ENCODE measurements at regions of chr3 and their contacts with region 1.

Region 1: DNA sequence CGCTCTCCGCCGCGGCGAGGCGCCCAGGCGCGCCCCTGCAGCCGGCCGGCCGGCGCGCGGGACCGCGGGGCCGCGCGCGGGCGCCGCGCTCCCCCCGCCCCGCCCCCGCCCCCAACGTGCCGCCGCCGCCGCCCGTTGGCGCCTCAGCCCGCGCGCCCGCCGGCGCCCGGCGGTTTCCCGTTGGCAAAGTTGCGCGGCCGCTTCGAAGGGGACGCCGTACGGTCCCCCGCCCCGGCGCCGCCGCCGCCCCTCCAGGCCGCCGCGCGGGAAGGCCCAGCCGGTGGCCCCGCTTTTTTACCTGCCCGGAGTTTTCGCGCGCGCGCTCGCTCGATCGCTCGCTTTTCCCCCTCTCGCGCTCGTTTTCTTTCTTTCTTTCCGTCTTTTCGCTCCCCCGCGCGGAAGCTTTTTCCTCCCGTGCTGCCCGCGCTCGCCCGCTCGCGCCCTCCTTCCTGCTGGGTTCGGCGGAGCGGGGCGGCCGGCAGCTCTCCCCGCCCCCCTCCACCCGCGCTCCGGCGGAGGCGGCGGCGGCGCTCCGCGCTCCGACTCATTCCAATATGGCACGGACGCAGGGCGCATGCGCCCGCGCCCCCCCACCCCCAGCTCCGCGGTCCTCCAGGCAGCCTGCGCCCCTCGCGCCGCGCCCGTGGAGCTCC is at the start of gene SFMBT1:
- DNase-seq: peak; percentile 92
- ATAC-seq: peak; percentile 51
- H3K4me3 ChIP-seq: peak within 1 kb of the TSS; percentile 41 to 94 (median 84)
- H3K4me3 Mint-ChIP-seq: peak within 1 kb of the TSS; percentile 98
- H3K27ac ChIP-seq: peak within 1 kb of the TSS; percentile 83 to 88
- H3K27ac Mint-ChIP-seq: peak within 1 kb of the TSS; percentile 99
- H3K4me1 ChIP-seq: peaks cover 19 to 30% of the 10 kb centered on the region in 2 donors
- H3K4me1 Mint-ChIP-seq: peaks cover 43% of the 10 kb centered on the region
- H3K27me3 ChIP-seq: no peaks in the 10 kb centered on the region
- H3K27me3 Mint-ChIP-seq: no peaks in the 10 kb centered on the region
- CTCF ChIP-seq: no peak
- total RNA-seq, gene SFMBT1: 55.8 and 60.3 TPM in 2 replicates

Region 2: GRCh38 chr3:52685709-52686691 is 359.6 kb before region 1 on chr3 and contains the starts of genes GNL3 and PBRM1:
- CTCF ChIA-PET with region 1: no interaction called
- POLR2A ChIA-PET with region 1: no interaction called
- intact Hi-C with region 1: loop called (anchors 2 kb)
- DNase-seq: peak; percentile 98
- ATAC-seq: peak; percentile 86
- H3K4me3 ChIP-seq: peak within 1 kb of the TSS; percentile 67 to 90 (median 86)
- H3K4me3 Mint-ChIP-seq: peak within 1 kb of the TSS; percentile 99
- H3K27ac ChIP-seq: peak within 1 kb of the TSS; percentile 92 to 97
- H3K27ac Mint-ChIP-seq: peak within 1 kb of the TSS; percentile 100
- H3K4me1 ChIP-seq: peaks cover 20 to 21% of the 10 kb centered on the region in 2 donors
- H3K4me1 Mint-ChIP-seq: peaks cover 36% of the 10 kb centered on the region
- H3K27me3 ChIP-seq: no peaks in the 10 kb centered on the region
- H3K27me3 Mint-ChIP-seq: no peaks in the 10 kb centered on the region
- CTCF ChIP-seq: no peak
- total RNA-seq, gene GNL3: 67.3 and 68.5 TPM in 2 replicates
- total RNA-seq, gene PBRM1: 81.1 and 85.9 TPM in 2 replicates

Region 3: GRCh38 chr3:52742418-52743041 is 303.1 kb before region 1 on chr3:
- CTCF ChIA-PET with region 1: no interaction called
- POLR2A ChIA-PET with region 1: no interaction called
- intact Hi-C with region 1: loop called (anchors 1 kb)
- DNase-seq: peak; percentile 58
- ATAC-seq: no peak
- H3K4me3 ChIP-seq: no peak overlapping the region
- H3K4me3 Mint-ChIP-seq: no peak overlapping the region
- H3K27ac ChIP-seq: no peak overlapping the region
- H3K27ac Mint-ChIP-seq: no peak overlapping the region
- H3K4me1 ChIP-seq: no peaks in the 10 kb centered on the region
- H3K4me1 Mint-ChIP-seq: no peaks in the 10 kb centered on the region
- H3K27me3 ChIP-seq: no peaks in the 10 kb centered on the region
- H3K27me3 Mint-ChIP-seq: no peaks in the 10 kb centered on the region
- CTCF ChIP-seq: peak; percentile 77

Region 4: GRCh38 chr3:52897130-52898122 is 148.2 kb before region 1 on chr3 and contains the start of gene STIMATE:
- CTCF ChIA-PET with region 1: interaction called, 4 read pairs
- POLR2A ChIA-PET with region 1: interaction called, 5 read pairs
- intact Hi-C with region 1: loop called (anchors 1 kb)
- DNase-seq: peak; percentile 90
- ATAC-seq: peak; percentile 95
- H3K4me3 ChIP-seq: peak within 1 kb of the TSS; percentile 69 to 84 (median 78)
- H3K4me3 Mint-ChIP-seq: peak within 1 kb of the TSS; percentile 93
- H3K27ac ChIP-seq: peak within 1 kb of the TSS in 1 of 2 donors; percentile 52
- H3K27ac Mint-ChIP-seq: peak within 1 kb of the TSS; percentile 78
- H3K4me1 ChIP-seq: peaks cover 17 to 27% of the 10 kb centered on the region in 2 donors
- H3K4me1 Mint-ChIP-seq: peaks cover 48% of the 10 kb centered on the region
- H3K27me3 ChIP-seq: no peaks in the 10 kb centered on the region
- H3K27me3 Mint-ChIP-seq: no peaks in the 10 kb centered on the region
- CTCF ChIP-seq: no peak
- total RNA-seq, gene STIMATE: 37.7 and 38.4 TPM in 2 replicates

Region 5: DNA sequence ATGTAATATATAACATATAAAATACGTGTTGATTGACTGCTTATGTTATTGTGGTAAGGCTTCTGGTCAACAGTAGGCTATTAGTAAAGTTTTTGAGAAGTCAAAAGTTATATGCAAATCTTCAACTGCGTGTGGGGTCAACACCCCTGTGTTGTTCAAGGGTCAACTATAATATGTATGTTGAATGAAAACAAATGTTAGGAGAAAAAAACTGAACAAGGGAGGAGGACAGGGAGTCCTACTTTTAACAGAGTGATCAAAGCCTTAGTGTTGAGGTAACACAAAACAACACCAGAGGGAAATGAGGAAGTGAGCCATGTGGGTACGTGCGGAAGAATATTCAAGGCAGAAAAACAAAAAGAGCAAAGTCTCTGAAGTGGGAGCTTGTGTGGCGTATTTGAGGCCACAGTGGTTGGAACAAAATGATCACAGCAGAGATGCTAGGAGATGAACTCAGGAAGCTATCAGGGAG is 62.3 kb before region 1 on chr3:
- CTCF ChIA-PET with region 1: interaction called, 5 read pairs
- POLR2A ChIA-PET with region 1: interaction called, 17 read pairs
- intact Hi-C with region 1: loop called (anchors 1 kb)
- DNase-seq: peak; percentile 81
- ATAC-seq: peak; percentile 84
- H3K4me3 ChIP-seq: peak overlapping the region in 1 of 5 experiments; percentile 31
- H3K4me3 Mint-ChIP-seq: peak overlapping the region; percentile 24
- H3K27ac ChIP-seq: peak overlapping the region; percentile 63 to 87
- H3K27ac Mint-ChIP-seq: peak overlapping the region; percentile 92
- H3K4me1 ChIP-seq: peaks cover 31 to 35% of the 10 kb centered on the region in 2 donors
- H3K4me1 Mint-ChIP-seq: peaks cover 41% of the 10 kb centered on the region
- H3K27me3 ChIP-seq: no peaks in the 10 kb centered on the region
- H3K27me3 Mint-ChIP-seq: no peaks in the 10 kb centered on the region
- CTCF ChIP-seq: no peak

Region 6: GRCh38 chr3:53023068-53023823 is 22.4 kb before region 1 on chr3:
- CTCF ChIA-PET with region 1: interaction called, 8 read pairs
- POLR2A ChIA-PET with region 1: interaction called, 3 read pairs
- intact Hi-C with region 1: loop called (anchors 2 kb)
- DNase-seq: no peak
- ATAC-seq: no peak
- H3K4me3 ChIP-seq: no peak overlapping the region
- H3K4me3 Mint-ChIP-seq: no peak overlapping the region
- H3K27ac ChIP-seq: no peak overlapping the region
- H3K27ac Mint-ChIP-seq: no peak overlapping the region
- H3K4me1 ChIP-seq: peaks cover 14 to 20% of the 10 kb centered on the region in 2 donors
- H3K4me1 Mint-ChIP-seq: peaks cover 50% of the 10 kb centered on the region
- H3K27me3 ChIP-seq: no peaks in the 10 kb centered on the region
- H3K27me3 Mint-ChIP-seq: no peaks in the 10 kb centered on the region
- CTCF ChIP-seq: no peak

Measured in B cell (primary cell).